Left ventricle myocardium inferior (tissue), 1 donor: ENCODE measurements at regions of chr15 and their contacts with region 1.

Region 1: GRCh38 chr15:66700802-66701421 is 1.1 kb upstream of the SMAD6 start:
- DNase-seq: peak; percentile 97
- H3K4me3 ChIP-seq: peak overlapping the region; percentile 81
- H3K27ac ChIP-seq: peak overlapping the region; percentile 94
- H3K4me1 ChIP-seq: peaks cover 62% of the 10 kb centered on the region
- H3K27me3 ChIP-seq: no peaks in the 10 kb centered on the region
- CTCF ChIP-seq: no peak

Region 2: DNA sequence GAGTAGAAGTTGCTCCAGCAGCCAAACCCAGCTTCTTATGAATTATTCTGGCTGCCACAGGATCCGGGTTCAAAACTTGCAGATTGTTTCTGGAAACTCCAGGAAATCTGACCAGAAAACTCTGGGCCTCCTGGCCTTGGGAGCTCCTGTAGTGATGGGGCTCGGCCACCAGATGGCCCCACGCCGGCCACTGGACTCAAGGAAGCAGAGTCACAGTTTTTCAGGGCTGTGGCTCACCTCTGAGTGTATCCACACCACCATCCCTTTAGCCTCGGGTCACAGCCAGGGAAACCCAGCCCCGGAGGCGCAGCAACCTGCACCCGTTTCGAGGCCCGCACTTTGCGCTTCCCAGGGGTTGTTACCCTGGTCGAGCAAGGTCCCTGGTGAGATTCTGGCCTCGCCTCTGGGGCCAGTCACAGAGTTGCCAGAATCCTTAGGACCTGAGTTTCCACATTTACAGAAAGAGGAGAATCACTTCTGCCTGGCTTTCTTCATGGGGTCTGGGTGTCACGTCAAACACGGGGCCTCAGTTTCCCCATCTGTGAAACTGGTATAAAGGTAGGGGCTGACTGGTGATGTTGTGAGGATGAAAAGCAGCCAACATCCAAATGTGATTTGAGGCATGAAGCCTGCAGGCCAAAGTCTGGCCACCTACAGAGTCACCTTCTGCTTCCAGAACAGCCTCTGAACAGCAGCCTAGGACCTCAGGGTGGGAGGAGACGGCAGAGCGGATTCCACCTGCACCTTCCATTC is 81.6 kb before region 1 on chr15:
- intact Hi-C with region 1: loop called (anchors 5 kb)
- DNase-seq: peak; percentile 74
- H3K4me3 ChIP-seq: no peak overlapping the region
- H3K27ac ChIP-seq: peak overlapping the region; percentile 85
- H3K4me1 ChIP-seq: peaks cover 47% of the 10 kb centered on the region
- H3K27me3 ChIP-seq: peaks cover 5% of the 10 kb centered on the region
- CTCF ChIP-seq: peak; percentile 93

Region 3: GRCh38 chr15:67479781-67480505 is 779.0 kb after region 1 on chr15:
- intact Hi-C with region 1: no loop called
- DNase-seq: no peak
- H3K4me3 ChIP-seq: peak overlapping the region; percentile 25
- H3K27ac ChIP-seq: peak overlapping the region; percentile 43
- H3K4me1 ChIP-seq: peaks cover 9% of the 10 kb centered on the region
- H3K27me3 ChIP-seq: no peaks in the 10 kb centered on the region
- CTCF ChIP-seq: no peak

Region 4: DNA sequence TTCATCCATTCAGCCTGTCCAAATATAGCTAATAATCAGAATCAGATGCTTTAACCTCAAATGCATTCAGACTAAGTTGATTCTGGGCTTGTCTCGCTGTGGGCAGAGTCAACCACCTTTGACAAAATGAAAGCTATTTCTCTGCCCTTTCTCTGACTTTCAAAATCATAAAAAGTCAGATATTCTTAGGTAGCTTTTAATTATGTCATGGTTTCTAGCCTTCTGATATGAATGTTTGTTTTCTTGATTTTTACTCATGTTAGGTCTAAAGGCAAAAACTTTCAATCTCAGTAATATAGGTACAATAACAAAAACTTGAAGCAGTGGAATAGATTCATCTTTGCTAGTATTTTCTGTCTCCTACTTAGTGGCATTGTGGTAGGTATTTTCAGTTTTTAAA is 794.7 kb after region 1 on chr15:
- intact Hi-C with region 1: no loop called
- DNase-seq: no peak
- H3K4me3 ChIP-seq: no peak overlapping the region
- H3K27ac ChIP-seq: no peak overlapping the region
- H3K4me1 ChIP-seq: no peaks in the 10 kb centered on the region
- H3K27me3 ChIP-seq: no peaks in the 10 kb centered on the region
- CTCF ChIP-seq: no peak